ENCODE measurements at regions of chr6 and their contacts with region 1.

Region 1: GRCh38 chr6:131548441-131548840 is 24.6 kb upstream of the ARG1 start:
- DNase-seq: no peak
- ATAC-seq: no peak
- H3K4me3 ChIP-seq: no peak overlapping the region
- H3K4me3 Mint-ChIP-seq: no peak overlapping the region
- H3K27ac ChIP-seq: no peak overlapping the region
- H3K27ac Mint-ChIP-seq: no peak overlapping the region
- H3K4me1 ChIP-seq: no peaks in the 10 kb centered on the region
- H3K4me1 Mint-ChIP-seq: no peaks in the 10 kb centered on the region
- H3K27me3 ChIP-seq: peaks cover 0 to 2% of the 10 kb centered on the region in 2 experiments
- H3K27me3 Mint-ChIP-seq: peaks cover under 1% of the 10 kb centered on the region
- CTCF ChIP-seq: no peak

Region 2: DNA sequence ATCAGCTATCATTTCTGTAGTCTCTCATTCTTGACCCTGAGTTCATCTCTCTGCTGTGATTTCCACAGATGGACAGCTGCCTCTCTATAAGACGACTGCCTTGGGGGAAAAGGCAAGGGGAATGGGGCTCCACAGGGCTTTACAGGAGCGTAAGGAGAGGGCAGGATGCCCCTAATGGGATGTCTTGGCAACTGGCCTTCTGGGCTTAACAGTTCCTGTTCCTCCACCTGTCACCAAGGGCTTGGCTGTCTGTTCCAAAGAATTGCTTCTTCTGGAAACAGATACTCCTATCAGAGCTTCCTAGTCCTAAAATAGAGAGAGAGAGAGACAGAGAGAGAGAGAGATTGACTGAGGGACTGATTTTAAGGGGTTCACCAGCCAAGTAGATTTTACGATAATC is 1000.7 kb before region 1 on chr6:
- CTCF ChIA-PET with region 1: no interaction called
- POLR2A ChIA-PET with region 1: no interaction called
- intact Hi-C with region 1: loop called in 1 of 2 experiments (anchors 5 kb)
- DNase-seq: no peak
- ATAC-seq: no peak
- H3K4me3 ChIP-seq: no peak overlapping the region
- H3K4me3 Mint-ChIP-seq: no peak overlapping the region
- H3K27ac ChIP-seq: no peak overlapping the region
- H3K27ac Mint-ChIP-seq: no peak overlapping the region
- H3K4me1 ChIP-seq: no peaks in the 10 kb centered on the region
- H3K4me1 Mint-ChIP-seq: peaks cover 2% of the 10 kb centered on the region
- H3K27me3 ChIP-seq: no peaks in the 10 kb centered on the region
- H3K27me3 Mint-ChIP-seq: no peaks in the 10 kb centered on the region
- CTCF ChIP-seq: no peak

Region 3: GRCh38 chr6:131565056-131565455 is 16.6 kb after region 1 on chr6:
- CTCF ChIA-PET with region 1: no interaction called
- POLR2A ChIA-PET with region 1: no interaction called
- intact Hi-C with region 1: no loop called
- DNase-seq: no peak
- ATAC-seq: no peak
- H3K4me3 ChIP-seq: no peak overlapping the region
- H3K4me3 Mint-ChIP-seq: no peak overlapping the region
- H3K27ac ChIP-seq: no peak overlapping the region
- H3K27ac Mint-ChIP-seq: no peak overlapping the region
- H3K4me1 ChIP-seq: no peaks in the 10 kb centered on the region
- H3K4me1 Mint-ChIP-seq: peaks cover 7% of the 10 kb centered on the region
- H3K27me3 ChIP-seq: no peaks in the 10 kb centered on the region
- H3K27me3 Mint-ChIP-seq: no peaks in the 10 kb centered on the region
- CTCF ChIP-seq: no peak